ENCODE measurements at regions of chr5 and their contacts with region 1.

Region 1: GRCh38 chr5:50415912-50416311 is 25.2 kb downstream of the EMB start:
- DNase-seq: peak; percentile 62 to 76 (median 70)
- H3K4me3 ChIP-seq: no peak overlapping the region
- H3K4me3 Mint-ChIP-seq: peak overlapping the region in 7 of 8 donors; percentile 12 to 79 (median 61)
- H3K27ac ChIP-seq: no peak overlapping the region
- H3K27ac Mint-ChIP-seq: peak overlapping the region in 6 of 7 donors; percentile 75 to 94 (median 88)
- H3K4me1 ChIP-seq: peaks cover 87% of the 10 kb centered on the region
- H3K4me1 Mint-ChIP-seq: peaks cover 63 to 93% (median 78%) of the 10 kb centered on the region in 4 donors
- H3K27me3 ChIP-seq: no peaks in the 10 kb centered on the region
- H3K27me3 Mint-ChIP-seq: no peaks in the 10 kb centered on the region

Region 2: GRCh38 chr5:50365426-50366251 is 50.3 kb before region 1 on chr5:
- CTCF ChIA-PET with region 1: no interaction called
- POLR2A ChIA-PET with region 1: no interaction called
- intact Hi-C with region 1: loop called (anchors 10 kb)
- DNase-seq: no peak
- H3K4me3 ChIP-seq: no peak overlapping the region
- H3K4me3 Mint-ChIP-seq: peak overlapping the region in 3 of 8 donors; percentile 1 to 29 (median 3)
- H3K27ac ChIP-seq: no peak overlapping the region
- H3K27ac Mint-ChIP-seq: peak overlapping the region in 6 of 7 donors; percentile 4 to 90 (median 67)
- H3K4me1 ChIP-seq: peaks cover 25% of the 10 kb centered on the region
- H3K4me1 Mint-ChIP-seq: peaks cover 29 to 57% (median 43%) of the 10 kb centered on the region in 4 donors
- H3K27me3 ChIP-seq: no peaks in the 10 kb centered on the region
- H3K27me3 Mint-ChIP-seq: no peaks in the 10 kb centered on the region

Region 3: GRCh38 chr5:50435168-50435567 is 19.3 kb after region 1 on chr5:
- CTCF ChIA-PET with region 1: interaction called, 5 read pairs
- POLR2A ChIA-PET with region 1: interaction called, 20 read pairs
- intact Hi-C with region 1: loop called (anchors 1 kb)
- DNase-seq: peak in 1 of 5 donors; percentile 35
- H3K4me3 ChIP-seq: peak overlapping the region in 1 of 2 donors; percentile 13
- H3K4me3 Mint-ChIP-seq: peak overlapping the region; percentile 62 to 76 (median 72)
- H3K27ac ChIP-seq: peak overlapping the region; percentile 15
- H3K27ac Mint-ChIP-seq: peak overlapping the region; percentile 53 to 95 (median 73)
- H3K4me1 ChIP-seq: peaks cover 92% of the 10 kb centered on the region
- H3K4me1 Mint-ChIP-seq: peaks cover 57 to 95% (median 76%) of the 10 kb centered on the region in 4 donors
- H3K27me3 ChIP-seq: no peaks in the 10 kb centered on the region
- H3K27me3 Mint-ChIP-seq: no peaks in the 10 kb centered on the region

Region 4: DNA sequence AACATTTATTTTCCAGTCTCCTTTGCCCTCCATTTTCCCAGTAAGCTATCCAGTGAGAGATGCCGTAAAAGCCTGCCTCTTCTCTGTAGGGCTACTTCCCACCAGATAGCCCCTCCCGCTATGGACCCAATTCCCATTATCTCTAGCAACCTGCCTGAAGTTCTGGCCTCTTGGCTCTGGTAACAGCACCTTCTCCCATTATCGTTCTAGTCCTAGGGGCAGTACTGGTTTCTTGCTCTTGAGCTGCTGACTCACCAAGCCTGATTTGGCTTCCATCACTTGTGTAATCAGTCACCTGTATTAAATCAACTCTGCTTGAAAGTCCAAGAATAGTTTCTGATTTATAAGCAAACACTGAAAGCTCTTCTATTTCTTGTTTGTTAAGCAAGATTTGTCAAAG is 207.8 kb after region 1 on chr5:
- CTCF ChIA-PET with region 1: no interaction called
- POLR2A ChIA-PET with region 1: no interaction called
- intact Hi-C with region 1: no loop called
- DNase-seq: no peak
- H3K4me3 ChIP-seq: no peak overlapping the region
- H3K4me3 Mint-ChIP-seq: no peak overlapping the region
- H3K27ac ChIP-seq: no peak overlapping the region
- H3K27ac Mint-ChIP-seq: peak overlapping the region in 1 of 7 donors; percentile 43
- H3K4me1 ChIP-seq: no peaks in the 10 kb centered on the region
- H3K4me1 Mint-ChIP-seq: peaks cover 2 to 21% (median 12%) of the 10 kb centered on the region in 4 donors
- H3K27me3 ChIP-seq: no peaks in the 10 kb centered on the region
- H3K27me3 Mint-ChIP-seq: peaks cover 0 to 1% of the 10 kb centered on the region in 2 donors

Measured in CD4-positive, alpha-beta memory T cell (primary cell).